ENCODE measurements at regions of chr12 and their contacts with region 1.

Region 1: GRCh38 chr12:57520053-57520871 is at the start of gene DDIT3:
- DNase-seq: peak; percentile 99
- H3K4me3 Mint-ChIP-seq: peak within 1 kb of the TSS; percentile 91
- H3K27ac Mint-ChIP-seq: peak within 1 kb of the TSS; percentile 100
- H3K4me1 Mint-ChIP-seq: peaks cover 42% of the 10 kb centered on the region
- H3K27me3 Mint-ChIP-seq: no peaks in the 10 kb centered on the region
- total RNA-seq, gene DDIT3: 10.9 and 11.4 TPM in 2 replicates

Region 2: GRCh38 chr12:57135527-57136326 is 384.5 kb before region 1 on chr12:
- intact Hi-C with region 1: no loop called
- DNase-seq: no peak
- H3K4me3 Mint-ChIP-seq: no peak overlapping the region
- H3K27ac Mint-ChIP-seq: no peak overlapping the region
- H3K4me1 Mint-ChIP-seq: no peaks in the 10 kb centered on the region
- H3K27me3 Mint-ChIP-seq: peaks cover 22% of the 10 kb centered on the region

Region 3: GRCh38 chr12:57367121-57367520 is 153.1 kb before region 1 on chr12:
- intact Hi-C with region 1: no loop called
- DNase-seq: no peak
- H3K4me3 Mint-ChIP-seq: no peak overlapping the region
- H3K27ac Mint-ChIP-seq: no peak overlapping the region
- H3K4me1 Mint-ChIP-seq: peaks cover 3% of the 10 kb centered on the region
- H3K27me3 Mint-ChIP-seq: no peaks in the 10 kb centered on the region

Region 4: DNA sequence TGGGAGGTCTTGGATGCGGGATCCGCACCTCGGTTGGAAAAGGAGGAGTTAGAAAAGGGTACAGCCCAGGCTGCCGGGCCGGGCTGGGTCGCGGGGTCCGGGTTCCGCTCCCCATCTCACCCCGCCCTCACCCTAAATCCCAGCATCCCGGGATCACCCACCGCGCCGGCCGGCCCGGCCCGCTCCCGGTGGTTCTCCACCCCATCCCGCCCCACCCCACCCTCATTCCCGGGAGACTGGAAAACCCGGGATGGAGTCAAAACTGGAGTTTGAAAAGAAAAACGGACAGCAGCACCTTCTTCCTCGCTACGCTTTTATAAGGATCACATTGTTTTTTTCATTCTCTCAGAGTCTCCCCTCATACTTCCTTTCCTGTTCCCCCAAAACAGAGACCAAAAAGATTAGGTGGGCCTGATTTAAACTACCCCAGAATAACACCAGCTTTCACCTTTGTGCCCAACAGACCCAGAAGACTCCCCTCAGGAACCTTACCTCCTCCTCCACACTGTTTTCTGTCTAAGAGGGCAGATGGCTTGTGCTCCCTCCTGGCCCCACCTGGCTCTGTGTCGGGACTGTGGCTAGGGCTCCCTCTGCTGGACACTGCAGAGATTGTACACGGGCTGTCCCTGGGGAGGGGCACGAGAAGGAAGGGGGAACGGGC is 57.9 kb before region 1 on chr12:
- intact Hi-C with region 1: loop called (anchors 1 kb)
- DNase-seq: peak; percentile 84
- H3K4me3 Mint-ChIP-seq: peak overlapping the region; percentile 86
- H3K27ac Mint-ChIP-seq: peak overlapping the region; percentile 47
- H3K4me1 Mint-ChIP-seq: peaks cover 38% of the 10 kb centered on the region
- H3K27me3 Mint-ChIP-seq: peaks cover 12% of the 10 kb centered on the region

Region 5: GRCh38 chr12:57487597-57488401 is 32.5 kb before region 1 on chr12 and contains the start of gene MARS1:
- intact Hi-C with region 1: loop called (anchors 1 kb)
- DNase-seq: peak; percentile 92
- H3K4me3 Mint-ChIP-seq: peak within 1 kb of the TSS; percentile 99
- H3K27ac Mint-ChIP-seq: peak within 1 kb of the TSS; percentile 95
- H3K4me1 Mint-ChIP-seq: peaks cover 25% of the 10 kb centered on the region
- H3K27me3 Mint-ChIP-seq: no peaks in the 10 kb centered on the region
- total RNA-seq, gene MARS1: 249 and 257 TPM in 2 replicates

Region 6: DNA sequence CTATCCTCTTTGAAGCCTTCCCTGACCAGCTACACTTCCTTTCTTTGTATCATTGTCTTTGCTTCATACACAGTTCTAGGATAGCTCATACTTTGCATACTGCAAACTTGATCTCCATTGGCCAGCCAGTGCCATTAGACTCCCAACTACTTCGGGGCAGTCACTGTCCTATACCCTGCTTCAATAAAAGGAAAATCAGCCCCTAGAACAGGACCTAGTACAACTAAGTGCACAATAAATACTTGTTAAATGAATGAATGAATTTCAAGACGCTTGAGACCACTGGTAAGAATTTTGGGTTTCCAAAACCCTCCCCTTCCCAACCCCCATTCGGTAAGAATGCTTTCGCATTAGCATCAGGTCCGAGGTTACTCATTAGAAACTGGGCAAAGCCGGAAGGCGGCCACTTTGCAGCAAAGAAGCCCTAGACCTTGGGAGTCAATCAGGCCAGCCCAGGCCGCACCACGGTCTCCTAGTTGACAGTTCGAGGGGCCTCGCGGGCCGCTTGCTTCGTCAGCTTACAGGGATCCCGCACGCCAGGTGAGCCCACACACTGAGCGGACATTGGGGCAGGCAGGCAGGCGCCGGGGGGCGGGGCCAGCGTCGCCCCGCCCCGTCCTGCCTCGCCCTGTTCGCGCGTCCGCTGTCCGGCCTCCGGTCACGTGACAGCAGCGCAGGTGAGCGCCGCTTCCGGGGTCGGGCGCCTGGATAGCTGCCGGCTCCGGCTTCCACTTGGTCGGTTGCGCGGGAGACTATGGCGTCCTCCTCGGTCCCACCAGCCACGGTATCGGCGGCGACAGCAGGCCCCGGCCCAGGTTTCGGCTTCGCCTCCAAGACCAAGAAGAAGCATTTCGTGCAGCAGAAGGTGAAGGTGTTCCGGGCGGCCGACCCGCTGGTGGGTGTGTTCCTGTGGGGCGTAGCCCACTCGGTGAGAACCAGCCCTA is 70.5 kb after region 1 on chr12 and contains the start of gene PIP4K2C:
- intact Hi-C with region 1: loop called (anchors 2 kb)
- DNase-seq: peak; percentile 73
- H3K4me3 Mint-ChIP-seq: peak within 1 kb of the TSS; percentile 86
- H3K27ac Mint-ChIP-seq: peak within 1 kb of the TSS; percentile 69
- H3K4me1 Mint-ChIP-seq: peaks cover 16% of the 10 kb centered on the region
- H3K27me3 Mint-ChIP-seq: no peaks in the 10 kb centered on the region
- total RNA-seq, gene PIP4K2C: 23.2 and 24.6 TPM in 2 replicates

Region 7: GRCh38 chr12:57846577-57847319 is 326.5 kb after region 1 on chr12 and contains the start of gene CTDSP2:
- intact Hi-C with region 1: loop called (anchors 5 kb)
- DNase-seq: peak; percentile 84
- H3K4me3 Mint-ChIP-seq: peak within 1 kb of the TSS; percentile 77
- H3K27ac Mint-ChIP-seq: peak within 1 kb of the TSS; percentile 28
- H3K4me1 Mint-ChIP-seq: peaks cover 28% of the 10 kb centered on the region
- H3K27me3 Mint-ChIP-seq: peaks cover 30% of the 10 kb centered on the region
- total RNA-seq, gene CTDSP2: 62.5 and 65.2 TPM in 2 replicates